ENCODE measurements at regions of chr1 and their contacts with region 1.

Region 1: DNA sequence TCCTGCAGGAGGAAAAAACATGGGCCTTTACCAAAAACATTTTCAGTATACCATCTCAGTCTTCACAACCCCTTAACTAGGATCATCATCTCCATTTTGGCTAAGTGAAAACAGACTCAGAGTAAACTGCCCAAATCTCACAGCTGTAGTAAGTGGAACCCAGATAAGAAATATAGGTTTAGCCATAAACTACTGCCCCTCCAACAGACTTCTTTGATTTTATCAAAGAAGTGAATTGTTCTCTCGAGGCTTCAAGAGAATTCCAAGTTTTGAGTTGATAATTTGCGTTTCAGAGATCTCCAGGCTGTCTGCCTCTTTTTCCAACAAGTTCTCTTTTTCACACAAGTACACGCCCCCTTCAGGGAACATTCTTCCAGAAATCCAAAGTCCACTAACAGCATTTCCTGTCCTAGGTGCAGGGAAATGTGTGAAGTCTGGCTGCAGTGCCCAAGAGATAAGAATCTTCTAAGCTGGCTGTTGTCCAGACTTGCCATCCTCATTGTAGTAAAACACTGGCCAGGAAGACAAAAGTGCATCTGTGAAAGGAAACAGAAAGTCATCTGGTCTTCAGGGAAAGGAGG is 30.8 kb downstream of the RNF19B start:
- DNase-seq: no peak
- H3K4me3 Mint-ChIP-seq: no peak overlapping the region
- H3K27ac Mint-ChIP-seq: no peak overlapping the region
- H3K4me1 Mint-ChIP-seq: peaks cover 22% of the 10 kb centered on the region
- H3K27me3 Mint-ChIP-seq: no peaks in the 10 kb centered on the region

Region 2: GRCh38 chr1:32964461-32965250 is 30.8 kb after region 1 on chr1 and contains the start of gene RNF19B:
- intact Hi-C with region 1: loop called (anchors 2 kb)
- DNase-seq: peak; percentile 94
- H3K4me3 Mint-ChIP-seq: peak within 1 kb of the TSS; percentile 91
- H3K27ac Mint-ChIP-seq: peak within 1 kb of the TSS; percentile 74
- H3K4me1 Mint-ChIP-seq: peaks cover 49% of the 10 kb centered on the region
- H3K27me3 Mint-ChIP-seq: no peaks in the 10 kb centered on the region
- total RNA-seq, gene RNF19B: 50.4 and 52.5 TPM in 2 replicates

Region 3: GRCh38 chr1:33007190-33008050 is 73.6 kb after region 1 on chr1:
- intact Hi-C with region 1: loop called (anchors 2 kb)
- DNase-seq: no peak
- H3K4me3 Mint-ChIP-seq: no peak overlapping the region
- H3K27ac Mint-ChIP-seq: no peak overlapping the region
- H3K4me1 Mint-ChIP-seq: peaks cover 18% of the 10 kb centered on the region
- H3K27me3 Mint-ChIP-seq: no peaks in the 10 kb centered on the region

Region 4: GRCh38 chr1:33055210-33056008 is 121.6 kb after region 1 on chr1:
- intact Hi-C with region 1: loop called (anchors 1 kb)
- DNase-seq: peak; percentile 17
- H3K4me3 Mint-ChIP-seq: no peak overlapping the region
- H3K27ac Mint-ChIP-seq: no peak overlapping the region
- H3K4me1 Mint-ChIP-seq: peaks cover 6% of the 10 kb centered on the region
- H3K27me3 Mint-ChIP-seq: peaks cover 4% of the 10 kb centered on the region

Region 5: GRCh38 chr1:33094971-33095604 is 161.3 kb after region 1 on chr1:
- intact Hi-C with region 1: loop called (anchors 5 kb)
- DNase-seq: no peak
- H3K4me3 Mint-ChIP-seq: no peak overlapping the region
- H3K27ac Mint-ChIP-seq: no peak overlapping the region
- H3K4me1 Mint-ChIP-seq: peaks cover 45% of the 10 kb centered on the region
- H3K27me3 Mint-ChIP-seq: no peaks in the 10 kb centered on the region

Measured in activated T-helper 2 cell treated with anti-CD3 and anti-CD28 coated beads, Interferon-gamma antibody, Interleukin-2, Interleukin-4, amounts not matched to agents 10 μg/mL and 5 μg/mL and 100 μg/mL, durations not matched to agents 14 hours and 24 hours and 36 hours (primary cell).